Adrenal gland (tissue), 19 donors: ENCODE measurements at regions of chr3 and their contacts with region 1.

Region 1: GRCh38 chr3:39499651-39500240 is 32.3 kb downstream of the MOBP start:
- DNase-seq: no peak
- H3K4me3 ChIP-seq: no peak overlapping the region
- H3K27ac ChIP-seq: no peak overlapping the region
- H3K4me1 ChIP-seq: no peaks in the 10 kb centered on the region
- H3K27me3 ChIP-seq: peaks cover 15% of the 10 kb centered on the region
- CTCF ChIP-seq: no peak
- POLR2A ChIP-seq: no peak

Region 2: GRCh38 chr3:39415983-39416382 is 83.8 kb before region 1 on chr3:
- intact Hi-C with region 1: loop called (anchors 5 kb)
- DNase-seq: no peak
- H3K4me3 ChIP-seq: no peak overlapping the region
- H3K27ac ChIP-seq: no peak overlapping the region
- H3K4me1 ChIP-seq: no peaks in the 10 kb centered on the region
- H3K27me3 ChIP-seq: no peaks in the 10 kb centered on the region
- CTCF ChIP-seq: no peak
- POLR2A ChIP-seq: no peak

Region 3: DNA sequence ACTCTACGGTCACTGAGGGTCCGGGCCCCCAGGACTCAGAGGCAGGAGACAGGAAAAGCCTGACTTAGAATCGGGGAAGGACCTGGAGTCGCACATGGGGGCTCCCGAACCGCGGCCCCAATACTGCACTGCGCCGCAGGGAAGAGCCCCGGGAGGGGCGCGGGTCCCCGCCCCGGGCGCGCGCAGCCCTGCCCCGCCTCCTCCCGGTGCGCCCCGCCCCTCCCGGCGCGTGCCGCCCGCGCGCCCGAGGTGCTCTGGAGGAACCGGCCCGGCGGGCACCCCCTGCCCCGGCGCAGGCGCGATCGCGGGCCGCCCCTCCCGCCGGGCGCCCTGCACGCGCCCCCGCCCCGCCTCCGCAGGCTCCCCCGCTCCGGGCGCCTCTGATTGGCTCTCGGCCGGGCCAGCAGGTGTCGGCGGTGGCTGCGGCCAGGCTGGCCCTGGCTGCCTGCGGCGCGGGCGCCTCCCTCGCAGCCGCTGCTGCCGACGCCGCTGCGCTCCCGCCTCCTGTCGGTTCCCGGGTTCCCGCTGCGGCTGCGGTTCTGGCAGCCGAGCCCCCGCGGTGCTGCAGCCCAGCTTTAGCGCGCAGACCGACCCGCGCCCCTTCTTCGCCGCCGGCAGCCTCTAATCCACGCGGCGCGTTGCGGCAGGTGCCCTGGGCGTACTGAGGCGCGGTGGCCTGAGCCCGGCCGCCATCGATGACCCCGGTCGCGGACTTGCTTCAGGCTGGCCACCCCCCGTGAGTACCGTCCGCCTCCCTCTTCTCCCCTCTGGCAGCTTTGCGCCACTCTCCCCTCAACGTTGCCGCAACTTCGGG is 309.6 kb after region 1 on chr3 and contains the start of gene MYRIP:
- intact Hi-C with region 1: no loop called
- DNase-seq: peak; percentile 38 to 75 (median 55)
- H3K4me3 ChIP-seq: peak within 1 kb of the TSS in 2 of 4 donors; percentile 9 to 62
- H3K27ac ChIP-seq: peak within 1 kb of the TSS in 1 of 5 donors; percentile 3
- H3K4me1 ChIP-seq: peaks cover 5 to 8% of the 10 kb centered on the region in 2 donors
- H3K27me3 ChIP-seq: peaks cover 47% of the 10 kb centered on the region
- CTCF ChIP-seq: no peak
- POLR2A ChIP-seq: no peak
- total RNA-seq, gene MYRIP: 0.24 to 4.8 (median 1.5) TPM